Right lobe of liver (tissue), 6 donors: ENCODE measurements at regions of chr7 and their contacts with region 1.

Region 1: GRCh38 chr7:74371381-74372341 is 82.0 kb upstream of the GTF2IRD1 start:
- DNase-seq: no peak
- ATAC-seq: no peak
- H3K4me3 ChIP-seq: no peak overlapping the region
- H3K27ac ChIP-seq: no peak overlapping the region
- H3K4me1 ChIP-seq: no peaks in the 10 kb centered on the region
- H3K27me3 ChIP-seq: no peaks in the 10 kb centered on the region
- CTCF ChIP-seq: no peak
- POLR2A ChIP-seq: no peak

Region 2: DNA sequence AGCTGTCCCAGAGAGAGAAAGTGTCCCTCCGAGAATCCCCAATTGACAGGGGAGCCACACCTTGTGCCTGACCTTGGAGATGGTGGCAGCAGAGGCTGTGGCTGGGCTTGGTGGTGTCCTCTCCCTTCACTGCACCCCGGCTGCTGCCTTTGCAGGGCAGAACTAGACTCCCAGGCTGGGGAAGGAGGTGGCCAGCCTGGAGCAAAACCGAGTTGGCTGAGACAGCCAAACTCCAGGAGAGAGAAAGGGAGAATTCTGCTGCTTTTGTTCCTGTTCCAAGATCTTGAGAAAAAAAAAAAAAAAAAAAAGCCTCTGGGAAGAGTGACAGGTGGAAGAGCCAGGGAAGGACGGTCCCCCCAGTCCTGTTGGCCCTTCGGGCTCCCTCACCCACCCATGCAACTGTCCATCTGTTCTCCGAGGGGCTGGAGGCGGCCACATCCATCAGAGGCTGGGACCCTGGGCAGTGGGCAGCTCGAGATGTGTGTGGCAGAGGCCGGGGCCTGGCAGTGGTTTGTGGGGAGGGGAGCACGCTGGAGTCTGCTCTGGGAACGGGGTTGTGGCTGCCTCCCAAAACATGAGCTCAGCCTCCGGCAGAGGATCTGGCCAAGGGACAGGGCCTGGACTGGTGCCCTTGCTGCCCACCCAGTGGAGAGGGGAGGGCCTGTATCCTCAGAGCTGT is 47.0 kb before region 1 on chr7:
- intact Hi-C with region 1: loop called in 1 of 2 experiments (anchors 10 kb)
- DNase-seq: no peak
- ATAC-seq: peak in 1 of 4 donors; percentile 14
- H3K4me3 ChIP-seq: no peak overlapping the region
- H3K27ac ChIP-seq: no peak overlapping the region
- H3K4me1 ChIP-seq: no peaks in the 10 kb centered on the region
- H3K27me3 ChIP-seq: no peaks in the 10 kb centered on the region
- CTCF ChIP-seq: no peak
- POLR2A ChIP-seq: no peak